Naive thymus-derived CD4-positive, alpha-beta T cell (primary cell): ENCODE measurements at regions of chr18 and their contacts with region 1.

Region 1: GRCh38 chr18:47100214-47100831 is 50.0 kb downstream of the HDHD2 start:
- DNase-seq: peak; percentile 16 to 63 (median 51)
- ATAC-seq: peak; percentile 68
- H3K4me3 ChIP-seq: no peak overlapping the region
- H3K4me3 Mint-ChIP-seq: no peak overlapping the region
- H3K27ac ChIP-seq: no peak overlapping the region
- H3K27ac Mint-ChIP-seq: no peak overlapping the region
- H3K4me1 ChIP-seq: no peaks in the 10 kb centered on the region
- H3K4me1 Mint-ChIP-seq: no peaks in the 10 kb centered on the region
- H3K27me3 ChIP-seq: no peaks in the 10 kb centered on the region
- H3K27me3 Mint-ChIP-seq: no peaks in the 10 kb centered on the region

Region 2: DNA sequence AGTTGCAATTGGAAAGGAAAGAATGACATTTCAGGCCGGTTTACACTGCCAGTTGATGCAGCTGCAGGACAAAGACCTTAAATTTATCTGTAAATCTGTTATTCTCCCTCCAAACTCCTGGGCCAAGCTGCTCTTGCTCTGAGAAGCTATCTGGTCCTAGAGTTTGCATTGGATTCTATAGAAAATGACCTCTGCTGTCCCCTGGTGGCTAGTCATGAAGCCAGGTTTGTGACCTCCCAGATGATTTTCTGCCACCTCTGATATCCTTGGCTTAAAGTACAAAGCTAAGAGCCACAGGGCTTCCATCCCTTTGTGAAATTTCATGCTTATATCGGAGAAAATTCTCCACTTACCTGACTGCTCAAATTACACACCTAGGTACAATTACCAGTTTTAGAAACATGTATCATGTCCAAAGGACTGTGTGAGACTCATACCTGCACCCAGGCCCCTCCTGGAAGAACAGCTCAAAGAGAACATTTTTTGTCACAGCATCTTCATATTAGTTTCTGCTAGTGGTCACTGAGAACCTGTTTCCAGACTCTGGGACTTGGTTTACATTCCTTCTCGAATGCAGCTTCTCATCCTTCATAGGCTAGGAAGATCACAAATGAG is 104.7 kb after region 1 on chr18:
- CTCF ChIA-PET with region 1: interaction called, 50 read pairs
- POLR2A ChIA-PET with region 1: interaction called, 3 read pairs
- intact Hi-C with region 1: loop called (anchors 1 kb)
- DNase-seq: peak in 7 of 9 donors; percentile 9 to 49 (median 34)
- ATAC-seq: no peak
- H3K4me3 ChIP-seq: no peak overlapping the region
- H3K4me3 Mint-ChIP-seq: no peak overlapping the region
- H3K27ac ChIP-seq: no peak overlapping the region
- H3K27ac Mint-ChIP-seq: no peak overlapping the region
- H3K4me1 ChIP-seq: no peaks in the 10 kb centered on the region
- H3K4me1 Mint-ChIP-seq: peaks cover 0 to 2% (median 0%) of the 10 kb centered on the region in 7 donors
- H3K27me3 ChIP-seq: no peaks in the 10 kb centered on the region
- H3K27me3 Mint-ChIP-seq: peaks cover 14 to 55% (median 28%) of the 10 kb centered on the region in 5 donors

Region 3: GRCh38 chr18:47283476-47283875 is 183.2 kb after region 1 on chr18:
- CTCF ChIA-PET with region 1: no interaction called
- POLR2A ChIA-PET with region 1: no interaction called
- intact Hi-C with region 1: loop called in 1 of 2 experiments (anchors 10 kb)
- DNase-seq: no peak
- ATAC-seq: no peak
- H3K4me3 ChIP-seq: no peak overlapping the region
- H3K4me3 Mint-ChIP-seq: no peak overlapping the region
- H3K27ac ChIP-seq: no peak overlapping the region
- H3K27ac Mint-ChIP-seq: no peak overlapping the region
- H3K4me1 ChIP-seq: no peaks in the 10 kb centered on the region
- H3K4me1 Mint-ChIP-seq: no peaks in the 10 kb centered on the region
- H3K27me3 ChIP-seq: no peaks in the 10 kb centered on the region
- H3K27me3 Mint-ChIP-seq: peaks cover 3 to 40% (median 24%) of the 10 kb centered on the region in 5 donors